ENCODE measurements at regions of chr5 and their contacts with region 1.

Region 1: GRCh38 chr5:74056789-74057164 is 430.8 kb downstream of the ARHGEF28 start:
- DNase-seq: peak; percentile 47
- H3K4me3 ChIP-seq: no peak overlapping the region
- H3K27ac ChIP-seq: no peak overlapping the region
- H3K4me1 ChIP-seq: peaks cover 6% of the 10 kb centered on the region
- H3K27me3 ChIP-seq: no peaks in the 10 kb centered on the region
- CTCF ChIP-seq: peak; percentile 49 to 83

Region 2: GRCh38 chr5:73985145-73985544 is 71.6 kb before region 1 on chr5:
- CTCF ChIA-PET with region 1: no interaction called
- dilution Hi-C with region 1: no loop called
- in situ Hi-C with region 1: no loop called
- intact Hi-C with region 1: loop called (anchors 2 kb)
- DNase-seq: peak; percentile 83
- H3K4me3 ChIP-seq: no peak overlapping the region
- H3K27ac ChIP-seq: peak overlapping the region; percentile 38
- H3K4me1 ChIP-seq: peaks cover 30% of the 10 kb centered on the region
- H3K27me3 ChIP-seq: no peaks in the 10 kb centered on the region
- CTCF ChIP-seq: peak; percentile 54 to 56

Region 3: GRCh38 chr5:74127381-74128320 is 70.9 kb after region 1 on chr5:
- CTCF ChIA-PET with region 1: no interaction called
- dilution Hi-C with region 1: no loop called
- in situ Hi-C with region 1: no loop called
- intact Hi-C with region 1: loop called (anchors 5 kb)
- DNase-seq: peak; percentile 48
- H3K4me3 ChIP-seq: peak overlapping the region in 2 of 3 experiments; percentile 15 to 27
- H3K27ac ChIP-seq: no peak overlapping the region
- H3K4me1 ChIP-seq: peaks cover 15% of the 10 kb centered on the region
- H3K27me3 ChIP-seq: no peaks in the 10 kb centered on the region
- CTCF ChIP-seq: peak; percentile 46 to 62